WTC11 (cell line): ENCODE measurements at regions of chr14 and their contacts with region 1.

Region 1: GRCh38 chr14:63174760-63175211 is 29.5 kb upstream of the RHOJ start:
- DNase-seq: peak; percentile 13
- ATAC-seq: peak; percentile 91
- H3K4me3 Mint-ChIP-seq: no peak overlapping the region
- H3K27ac Mint-ChIP-seq: no peak overlapping the region
- H3K4me1 Mint-ChIP-seq: no peaks in the 10 kb centered on the region
- H3K27me3 Mint-ChIP-seq: no peaks in the 10 kb centered on the region
- CTCF ChIP-seq: peak; percentile 31

Region 2: GRCh38 chr14:63155511-63156189 is 19.1 kb before region 1 on chr14:
- CTCF ChIA-PET with region 1: no interaction called
- POLR2A ChIA-PET with region 1: no interaction called
- DNase-seq: no peak
- ATAC-seq: no peak
- H3K4me3 Mint-ChIP-seq: no peak overlapping the region
- H3K27ac Mint-ChIP-seq: no peak overlapping the region
- H3K4me1 Mint-ChIP-seq: peaks cover 5% of the 10 kb centered on the region
- H3K27me3 Mint-ChIP-seq: no peaks in the 10 kb centered on the region
- CTCF ChIP-seq: no peak

Region 3: GRCh38 chr14:63203618-63204406 is 29.0 kb after region 1 on chr14:
- CTCF ChIA-PET with region 1: interaction called, 12 read pairs
- POLR2A ChIA-PET with region 1: interaction called, 3 read pairs
- DNase-seq: peak; percentile 25
- ATAC-seq: peak; percentile 90
- H3K4me3 Mint-ChIP-seq: no peak overlapping the region
- H3K27ac Mint-ChIP-seq: no peak overlapping the region
- H3K4me1 Mint-ChIP-seq: peaks cover 7% of the 10 kb centered on the region
- H3K27me3 Mint-ChIP-seq: no peaks in the 10 kb centered on the region
- CTCF ChIP-seq: no peak

Region 4: DNA sequence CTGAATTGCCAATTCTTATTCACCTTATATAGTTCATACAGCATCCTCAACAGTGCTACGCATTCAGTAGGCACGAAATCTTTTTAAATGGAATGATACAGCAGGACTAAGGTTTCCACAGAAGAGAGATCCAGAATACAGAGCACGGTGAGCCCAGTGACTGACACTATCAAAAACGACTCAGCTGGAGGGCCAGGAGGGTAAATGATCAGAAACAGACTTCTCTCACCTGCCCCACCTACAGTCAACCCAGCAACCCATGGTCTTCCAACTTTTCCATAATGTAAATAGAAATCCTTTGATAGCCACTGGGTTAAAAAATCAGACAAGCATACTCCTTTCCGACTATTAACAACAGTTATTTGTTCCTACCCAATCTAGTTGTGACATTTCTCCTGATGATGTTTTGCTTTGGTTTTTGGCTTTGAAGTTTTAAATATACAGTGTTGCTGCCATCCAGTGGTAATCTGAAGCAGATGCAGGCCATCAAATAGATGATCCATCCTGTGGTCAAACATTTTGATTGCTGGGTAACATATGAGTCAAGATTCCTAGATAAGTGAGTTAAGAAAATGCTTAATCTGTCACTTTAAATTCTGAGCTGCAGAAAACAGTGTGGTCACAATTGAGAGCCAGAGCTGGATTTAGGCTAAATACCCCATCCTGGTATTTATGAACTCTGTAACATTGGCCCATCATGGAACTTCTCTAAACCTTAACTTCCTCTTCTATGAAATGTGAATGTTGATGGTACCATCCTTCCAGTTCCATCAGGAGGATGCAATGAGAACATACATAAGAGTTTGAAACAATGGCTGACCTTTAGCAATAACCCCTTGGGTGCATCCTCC is 101.9 kb after region 1 on chr14:
- CTCF ChIA-PET with region 1: interaction called, 22 read pairs
- POLR2A ChIA-PET with region 1: no interaction called
- DNase-seq: no peak
- ATAC-seq: peak; percentile 70
- H3K4me3 Mint-ChIP-seq: no peak overlapping the region
- H3K27ac Mint-ChIP-seq: no peak overlapping the region
- H3K4me1 Mint-ChIP-seq: no peaks in the 10 kb centered on the region
- H3K27me3 Mint-ChIP-seq: no peaks in the 10 kb centered on the region
- CTCF ChIP-seq: peak; percentile 77